Left ventricle myocardium inferior (tissue), 1 donor: ENCODE measurements at regions of chr4 and their contacts with region 1.

Region 1: GRCh38 chr4:89434364-89434988 is 126.9 kb upstream of the GPRIN3 start:
- DNase-seq: no peak
- H3K4me3 ChIP-seq: no peak overlapping the region
- H3K27ac ChIP-seq: no peak overlapping the region
- H3K4me1 ChIP-seq: no peaks in the 10 kb centered on the region
- H3K27me3 ChIP-seq: no peaks in the 10 kb centered on the region
- CTCF ChIP-seq: peak; percentile 79

Region 2: GRCh38 chr4:89164400-89164799 is 270.1 kb before region 1 on chr4:
- intact Hi-C with region 1: loop called (anchors 10 kb)
- DNase-seq: no peak
- H3K4me3 ChIP-seq: no peak overlapping the region
- H3K27ac ChIP-seq: no peak overlapping the region
- H3K4me1 ChIP-seq: no peaks in the 10 kb centered on the region
- H3K27me3 ChIP-seq: no peaks in the 10 kb centered on the region
- CTCF ChIP-seq: no peak

Region 3: GRCh38 chr4:89226665-89227574 is 207.6 kb before region 1 on chr4:
- intact Hi-C with region 1: loop called (anchors 2 kb)
- DNase-seq: peak; percentile 68
- H3K4me3 ChIP-seq: no peak overlapping the region
- H3K27ac ChIP-seq: no peak overlapping the region
- H3K4me1 ChIP-seq: no peaks in the 10 kb centered on the region
- H3K27me3 ChIP-seq: no peaks in the 10 kb centered on the region
- CTCF ChIP-seq: peak; percentile 81